H1 (cell line): ENCODE measurements at regions of chr1 and their contacts with region 1.

Region 1: DNA sequence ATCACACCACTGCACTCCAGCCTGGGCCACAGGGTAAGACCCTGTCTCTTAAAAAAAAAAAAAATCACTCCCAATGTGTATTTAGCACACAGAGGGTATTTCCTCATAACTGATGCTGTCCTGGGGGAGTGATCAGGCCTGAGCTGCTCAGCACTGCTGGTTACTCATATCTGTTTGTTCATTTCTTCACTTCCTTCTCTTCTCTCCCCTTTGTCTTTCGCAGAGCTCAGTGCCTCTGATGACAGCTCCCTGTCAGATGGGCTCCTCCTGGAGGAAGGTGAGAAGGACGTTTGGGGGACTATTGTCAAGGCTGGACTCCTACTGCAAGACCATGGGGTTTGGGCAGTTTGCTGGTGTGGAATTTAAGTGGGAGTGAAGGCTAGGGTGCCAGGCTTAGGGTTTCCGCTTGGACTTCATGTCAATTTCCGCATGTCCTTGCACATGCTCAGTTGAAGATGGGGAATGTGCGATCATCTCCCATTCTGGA is 13.0 kb downstream of the INAVA start:
- DNase-seq: no peak
- H3K4me3 ChIP-seq: no peak overlapping the region
- H3K27ac ChIP-seq: no peak overlapping the region
- H3K4me1 ChIP-seq: no peaks in the 10 kb centered on the region
- H3K27me3 ChIP-seq: no peaks in the 10 kb centered on the region
- CTCF ChIP-seq: no peak
- EP300 ChIP-seq: no peak
- POLR2A ChIP-seq: no peak
- RAD21 ChIP-seq: no peak

Region 2: GRCh38 chr1:200896531-200897196 is 11.0 kb before region 1 on chr1:
- CTCF ChIA-PET with region 1: interaction called, 17 read pairs
- POLR2A ChIA-PET with region 1: interaction called, 208 read pairs
- DNase-seq: no peak
- H3K4me3 ChIP-seq: no peak overlapping the region
- H3K27ac ChIP-seq: no peak overlapping the region
- H3K4me1 ChIP-seq: peaks cover 13 to 39% (median 30%) of the 10 kb centered on the region in 4 experiments
- H3K27me3 ChIP-seq: no peaks in the 10 kb centered on the region
- CTCF ChIP-seq: no peak
- EP300 ChIP-seq: no peak
- POLR2A ChIP-seq: no peak
- RAD21 ChIP-seq: no peak